ENCODE measurements at regions of chr16 and their contacts with region 1.

Region 1: GRCh38 chr16:4957720-4958509 is at the start of gene SEC14L5:
- DNase-seq: peak; percentile 100
- ATAC-seq: peak; percentile 93
- H3K4me3 ChIP-seq: peak within 1 kb of the TSS; percentile 62 to 77 (median 62)
- H3K27ac ChIP-seq: peak within 1 kb of the TSS; percentile 77
- H3K4me1 ChIP-seq: peaks cover 23% of the 10 kb centered on the region
- H3K27me3 ChIP-seq: peaks cover 0 to 18% of the 10 kb centered on the region in 2 experiments; a peak in 3 of 5 replicates
- CTCF ChIP-seq: peak; percentile 61
- EP300 ChIP-seq: no peak; a peak in 1 of 4 replicates
- POLR2A ChIP-seq: peak; percentile 74 to 85
- RAD21 ChIP-seq: peak; percentile 41; the same call in 1 of the 2 replicates
- total RNA-seq, gene SEC14L5: 0.36 and 0.42 TPM in 2 replicates

Region 2: DNA sequence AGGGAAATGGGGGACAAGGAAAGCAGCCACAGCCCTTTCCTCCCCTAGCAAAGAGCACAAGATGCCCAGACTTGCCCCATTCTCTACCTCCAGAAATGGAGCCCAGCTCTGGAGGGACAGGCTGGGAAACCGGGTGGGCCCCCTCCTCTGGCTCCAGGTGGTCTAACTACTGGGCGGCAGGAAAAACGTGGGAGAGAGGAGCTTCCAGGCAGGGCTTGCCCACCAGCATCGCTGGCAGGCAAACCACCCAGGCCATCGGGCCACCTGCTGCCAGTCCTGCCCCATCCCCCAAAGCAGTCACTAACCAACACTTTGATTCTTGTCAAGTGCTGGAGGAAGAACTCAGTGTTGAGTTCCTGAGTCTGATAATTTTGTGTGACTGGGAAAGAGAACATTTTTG is 239.4 kb before region 1 on chr16:
- CTCF ChIA-PET with region 1: no interaction called
- POLR2A ChIA-PET with region 1: interaction called, 3 read pairs
- in situ Hi-C with region 1: no loop called
- intact Hi-C with region 1: loop called (anchors 5 kb)
- DNase-seq: no peak
- ATAC-seq: no peak
- H3K4me3 ChIP-seq: no peak overlapping the region
- H3K27ac ChIP-seq: no peak overlapping the region
- H3K4me1 ChIP-seq: no peaks in the 10 kb centered on the region
- H3K27me3 ChIP-seq: no peaks in the 10 kb centered on the region
- CTCF ChIP-seq: no peak
- EP300 ChIP-seq: no peak
- POLR2A ChIP-seq: no peak
- RAD21 ChIP-seq: no peak

Region 3: DNA sequence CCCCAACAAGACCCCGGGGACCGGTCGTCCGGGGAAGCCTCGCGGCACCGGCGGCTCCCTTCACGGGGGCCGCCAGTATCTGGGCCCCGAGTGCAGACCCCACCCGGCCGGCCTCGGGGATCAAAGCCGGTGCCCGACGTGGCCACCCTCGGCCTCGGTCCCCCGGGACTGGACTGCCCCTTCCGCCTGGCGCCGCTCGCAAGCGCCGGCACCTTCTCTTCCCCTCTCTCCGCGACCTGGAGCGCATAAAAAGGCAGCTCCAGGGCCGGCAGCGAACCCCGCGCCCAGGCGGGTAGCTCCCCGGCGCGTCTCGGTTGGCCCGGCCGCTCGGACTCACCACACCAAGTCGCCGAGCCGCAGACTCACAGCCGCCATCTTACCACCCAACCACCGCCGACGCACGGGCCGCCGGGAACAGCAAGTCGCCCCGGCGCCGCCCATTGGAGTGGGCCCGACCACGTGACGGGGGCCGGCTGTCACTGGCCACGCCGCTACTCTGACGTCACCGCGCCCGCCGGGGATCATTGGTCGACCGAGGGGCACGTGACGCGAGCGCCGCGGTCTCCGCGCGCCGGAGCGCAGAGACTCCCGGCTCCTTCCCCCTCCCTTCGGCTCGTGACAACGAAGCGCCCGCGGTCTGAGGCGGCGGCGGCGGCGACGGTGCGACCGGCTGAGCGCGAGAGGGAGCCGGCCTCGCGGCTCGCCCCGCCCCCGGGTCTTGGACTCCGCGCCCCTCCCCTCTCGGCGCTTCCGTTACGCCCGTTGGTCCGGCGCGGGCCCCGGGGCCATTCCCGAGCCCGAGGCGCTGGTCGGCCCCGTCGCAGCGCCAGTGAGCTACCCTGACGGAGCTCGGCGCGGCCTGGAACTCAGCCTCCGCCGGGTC is 110.8 kb before region 1 on chr16 and contains the starts of genes GLYR1 and UBN1:
- CTCF ChIA-PET with region 1: interaction called, 3 read pairs
- POLR2A ChIA-PET with region 1: interaction called, 13 read pairs
- in situ Hi-C with region 1: loop called (anchors 5 kb)
- intact Hi-C with region 1: loop called (anchors 1 kb)
- DNase-seq: peak; percentile 92
- ATAC-seq: peak; percentile 91
- H3K4me3 ChIP-seq: peak within 1 kb of the TSS; percentile 88 to 98 (median 94)
- H3K27ac ChIP-seq: peak within 1 kb of the TSS; percentile 95
- H3K4me1 ChIP-seq: peaks cover 52% of the 10 kb centered on the region
- H3K27me3 ChIP-seq: peaks cover 0 to 4% of the 10 kb centered on the region in 2 experiments; a peak in 1 of 5 replicates
- CTCF ChIP-seq: no peak; the same call in 1 of the 2 replicates
- EP300 ChIP-seq: no peak
- POLR2A ChIP-seq: peak; percentile 51 to 81
- RAD21 ChIP-seq: 0 out of 2 replicates have a peak, but pooled peaks have one; percentile 13
- total RNA-seq, gene GLYR1: 48.7 and 65.0 TPM in 2 replicates
- total RNA-seq, gene UBN1: 19.4 and 23.5 TPM in 2 replicates

Region 4: DNA sequence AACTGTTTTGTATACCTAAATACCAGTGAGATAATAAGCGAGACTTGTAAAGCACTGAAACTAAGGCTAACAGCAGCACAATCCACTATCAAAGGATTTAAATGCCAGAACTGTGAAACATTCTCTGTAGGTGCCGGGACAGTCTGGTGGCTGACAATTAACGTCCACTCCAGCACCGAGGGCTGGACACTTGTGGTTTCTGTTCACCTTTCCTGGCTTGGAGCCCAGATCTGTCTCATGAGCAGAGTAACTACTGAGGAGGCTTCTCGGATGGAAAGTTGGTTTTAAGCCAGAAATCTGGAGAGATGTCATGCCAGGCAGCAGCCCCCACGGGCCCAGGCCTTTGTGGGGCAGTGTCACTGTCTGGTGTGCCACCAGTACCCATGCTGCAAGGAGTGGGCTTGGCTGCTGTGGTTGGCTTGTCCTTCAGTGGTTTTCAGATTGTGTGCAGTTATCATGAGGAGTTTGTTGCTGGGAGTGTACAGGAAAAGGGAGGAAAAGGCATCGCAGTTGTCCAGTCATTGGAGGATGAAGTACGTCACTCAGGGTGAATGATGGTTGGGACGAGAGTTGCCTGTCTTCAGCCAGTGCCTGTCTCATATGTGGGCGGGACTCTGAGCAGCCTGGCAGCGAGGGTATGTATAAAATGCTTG is 75.2 kb before region 1 on chr16:
- CTCF ChIA-PET with region 1: no interaction called
- POLR2A ChIA-PET with region 1: no interaction called
- in situ Hi-C with region 1: no loop called
- intact Hi-C with region 1: no loop called
- DNase-seq: no peak
- ATAC-seq: no peak
- H3K4me3 ChIP-seq: no peak overlapping the region
- H3K27ac ChIP-seq: no peak overlapping the region
- H3K4me1 ChIP-seq: no peaks in the 10 kb centered on the region
- H3K27me3 ChIP-seq: no peaks in the 10 kb centered on the region
- CTCF ChIP-seq: no peak
- EP300 ChIP-seq: no peak
- POLR2A ChIP-seq: no peak
- RAD21 ChIP-seq: no peak

Region 5: GRCh38 chr16:4922721-4923344 is 35.1 kb before region 1 on chr16:
- CTCF ChIA-PET with region 1: no interaction called
- POLR2A ChIA-PET with region 1: no interaction called
- in situ Hi-C with region 1: no loop called
- intact Hi-C with region 1: no loop called
- DNase-seq: no peak
- ATAC-seq: no peak
- H3K4me3 ChIP-seq: no peak overlapping the region
- H3K27ac ChIP-seq: no peak overlapping the region
- H3K4me1 ChIP-seq: peaks cover 25% of the 10 kb centered on the region
- H3K27me3 ChIP-seq: no peaks in the 10 kb centered on the region
- CTCF ChIP-seq: no peak
- EP300 ChIP-seq: no peak
- POLR2A ChIP-seq: no peak
- RAD21 ChIP-seq: no peak

Region 6: GRCh38 chr16:4936991-4937781 is 20.7 kb before region 1 on chr16 and contains the start of gene PPL:
- CTCF ChIA-PET with region 1: interaction called, 3 read pairs
- POLR2A ChIA-PET with region 1: interaction called, 62 read pairs
- in situ Hi-C with region 1: no loop called
- intact Hi-C with region 1: no loop called
- DNase-seq: peak; percentile 93
- ATAC-seq: peak; percentile 91
- H3K4me3 ChIP-seq: peak within 1 kb of the TSS; percentile 76 to 91 (median 89)
- H3K27ac ChIP-seq: peak within 1 kb of the TSS; percentile 43
- H3K4me1 ChIP-seq: peaks cover 42% of the 10 kb centered on the region
- H3K27me3 ChIP-seq: no peaks in the 10 kb centered on the region; a peak in 1 of 5 replicates
- CTCF ChIP-seq: 0 out of 2 replicates have a peak, but pooled peaks have one; percentile 2
- EP300 ChIP-seq: peak in 1 of 2 experiments; percentile 37; a peak in 1 of 4 replicates
- POLR2A ChIP-seq: peak; percentile 16 to 72; a peak in 2 of 4 replicates
- RAD21 ChIP-seq: peak; percentile 24; the same call in 1 of the 2 replicates
- total RNA-seq, gene PPL: 4.4 and 6.6 TPM in 2 replicates

Region 7: DNA sequence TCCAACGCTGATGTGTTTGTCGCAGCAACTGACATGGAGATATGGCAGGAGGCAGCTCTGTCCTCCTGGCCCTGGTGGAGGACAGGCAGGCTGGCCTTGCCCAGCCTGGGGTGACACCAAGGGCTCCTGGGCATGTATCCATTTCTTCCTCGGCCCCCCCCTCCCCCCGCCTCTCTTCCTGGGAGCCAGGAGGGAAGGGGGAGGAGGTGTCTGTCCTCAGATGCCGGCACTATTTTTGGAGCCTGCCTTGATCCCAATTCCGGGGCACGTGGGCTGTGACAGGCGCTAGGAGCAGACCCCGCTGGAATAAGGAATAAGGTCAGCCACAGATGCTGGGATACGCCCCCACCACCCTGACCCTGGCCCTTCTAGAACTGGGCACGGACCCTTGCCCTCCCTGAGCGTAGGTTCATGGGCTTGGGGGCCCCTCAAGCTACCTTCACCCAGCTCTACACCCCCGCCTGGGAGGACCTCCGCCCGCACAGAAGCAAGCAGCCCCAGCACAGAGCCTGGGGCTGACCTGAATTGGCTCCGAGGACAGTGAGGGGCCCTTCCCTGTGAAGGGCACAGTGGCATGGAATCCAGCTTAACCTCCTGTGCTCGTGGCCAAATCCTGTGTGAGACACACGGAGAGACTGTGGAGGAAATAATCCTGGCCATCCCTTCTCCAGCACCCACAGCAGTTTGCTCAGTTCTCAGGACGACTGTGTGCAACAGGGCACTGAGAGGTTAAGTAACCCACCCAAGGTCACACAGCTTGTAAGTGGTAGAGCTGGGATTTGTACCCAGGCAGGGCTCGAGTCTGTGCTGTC is 24.3 kb after region 1 on chr16:
- CTCF ChIA-PET with region 1: no interaction called
- POLR2A ChIA-PET with region 1: no interaction called
- in situ Hi-C with region 1: no loop called
- intact Hi-C with region 1: no loop called
- DNase-seq: no peak
- ATAC-seq: peak; percentile 55
- H3K4me3 ChIP-seq: no peak overlapping the region
- H3K27ac ChIP-seq: no peak overlapping the region
- H3K4me1 ChIP-seq: peaks cover under 1% of the 10 kb centered on the region; the same call in 1 of the 2 replicates
- H3K27me3 ChIP-seq: peaks cover 5 to 45% of the 10 kb centered on the region in 2 experiments; a peak in 4 of 5 replicates
- CTCF ChIP-seq: no peak
- EP300 ChIP-seq: no peak
- POLR2A ChIP-seq: no peak
- RAD21 ChIP-seq: no peak

Region 8: GRCh38 chr16:5033256-5034169 is 75.6 kb after region 1 on chr16 and contains the start of gene NAGPA:
- CTCF ChIA-PET with region 1: no interaction called
- POLR2A ChIA-PET with region 1: interaction called, 27 read pairs
- in situ Hi-C with region 1: no loop called
- intact Hi-C with region 1: no loop called
- DNase-seq: peak; percentile 87
- ATAC-seq: peak; percentile 43
- H3K4me3 ChIP-seq: peak within 1 kb of the TSS; percentile 77 to 91 (median 78)
- H3K27ac ChIP-seq: peak within 1 kb of the TSS; percentile 98
- H3K4me1 ChIP-seq: peaks cover 52% of the 10 kb centered on the region
- H3K27me3 ChIP-seq: no peaks in the 10 kb centered on the region; a peak in 1 of 5 replicates
- CTCF ChIP-seq: no peak
- EP300 ChIP-seq: peak in 1 of 2 experiments; percentile 78; a peak in 2 of 4 replicates
- POLR2A ChIP-seq: peak; percentile 76 to 92
- RAD21 ChIP-seq: peak; percentile 51
- total RNA-seq, gene NAGPA: 29.8 and 60.3 TPM in 2 replicates

Region 9: DNA sequence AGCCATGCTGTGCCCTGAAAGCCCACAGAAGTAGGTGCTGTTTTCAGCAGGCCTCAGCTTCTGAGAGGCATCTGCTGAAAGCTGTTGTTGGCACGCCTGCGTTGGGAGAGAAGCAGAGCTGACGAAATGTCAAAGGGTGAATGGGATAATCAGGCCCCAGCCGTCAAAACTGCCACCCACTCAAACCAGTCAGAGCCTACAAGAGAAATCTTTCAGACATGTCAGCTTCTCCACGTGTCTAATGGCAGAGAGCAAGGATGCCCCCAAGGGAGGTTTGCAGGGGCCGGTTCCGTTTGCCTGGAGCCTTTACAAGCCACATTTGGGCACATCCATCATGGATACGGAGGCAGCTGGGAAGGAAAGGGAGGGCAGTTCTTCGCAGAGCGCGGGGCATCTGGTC is 707.9 kb after region 1 on chr16:
- CTCF ChIA-PET with region 1: no interaction called
- POLR2A ChIA-PET with region 1: no interaction called
- in situ Hi-C with region 1: no loop called
- intact Hi-C with region 1: no loop called
- DNase-seq: no peak
- ATAC-seq: no peak
- H3K4me3 ChIP-seq: no peak overlapping the region
- H3K27ac ChIP-seq: no peak overlapping the region
- H3K4me1 ChIP-seq: no peaks in the 10 kb centered on the region
- H3K27me3 ChIP-seq: no peaks in the 10 kb centered on the region; a peak in 1 of 5 replicates
- CTCF ChIP-seq: no peak
- EP300 ChIP-seq: no peak
- POLR2A ChIP-seq: no peak
- RAD21 ChIP-seq: no peak